AG04450 (cell line): ENCODE measurements at regions of chr6 and their contacts with region 1.

Region 1: GRCh38 chr6:52647199-52647598 is 23.7 kb upstream of the TMEM14A start:
- DNase-seq: no peak
- H3K4me3 ChIP-seq: no peak overlapping the region
- H3K27ac ChIP-seq: no peak overlapping the region
- H3K27me3 ChIP-seq: no peaks in the 10 kb centered on the region
- CTCF ChIP-seq: no peak

Region 2: DNA sequence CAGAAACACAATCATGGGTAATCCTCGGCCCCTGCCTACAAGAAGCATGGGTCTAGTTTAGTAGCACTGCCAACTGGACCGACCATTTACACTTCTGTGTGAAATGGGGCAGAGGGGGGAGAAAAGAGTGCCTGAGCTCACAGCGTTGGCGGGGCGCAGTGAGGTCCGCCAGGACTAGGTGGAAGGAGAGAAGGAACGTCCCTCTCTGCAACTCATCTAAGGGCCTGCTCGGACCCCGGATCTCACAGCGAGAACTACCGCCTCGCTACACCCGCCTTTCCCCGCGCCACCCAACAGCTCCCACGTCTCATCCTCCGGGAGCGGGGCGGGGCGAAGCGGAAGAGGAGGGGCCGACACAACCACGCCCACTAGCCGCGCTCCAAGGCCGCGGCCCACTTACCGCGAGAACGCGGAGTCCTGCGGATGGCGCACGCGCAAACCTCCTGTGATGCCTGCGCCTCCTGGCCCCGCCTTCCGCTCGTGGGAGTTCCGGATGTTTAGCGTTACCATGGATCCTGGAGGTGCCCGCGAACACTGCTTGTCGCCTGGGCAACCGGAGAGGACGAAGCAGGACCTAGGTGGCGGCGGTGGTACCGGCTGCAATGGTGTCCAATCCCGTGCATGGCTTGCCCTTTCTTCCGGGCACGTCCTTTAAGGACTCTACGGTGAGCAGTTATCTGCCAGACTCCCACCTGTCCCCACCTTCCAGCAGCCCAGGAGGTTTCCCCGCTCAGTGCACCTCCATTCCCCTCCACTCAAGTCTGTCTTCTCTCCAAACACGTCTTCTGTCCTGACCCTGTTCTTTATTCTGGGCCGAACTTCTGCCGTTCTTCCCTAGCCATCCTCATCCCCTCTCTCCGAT is 227.2 kb before region 1 on chr6 and contains the start of gene EFHC1:
- CTCF ChIA-PET with region 1: interaction called, 89 read pairs
- POLR2A ChIA-PET with region 1: interaction called, 6 read pairs
- DNase-seq: peak; percentile 93
- H3K4me3 ChIP-seq: peak within 1 kb of the TSS; percentile 78
- H3K27ac ChIP-seq: peak within 1 kb of the TSS; percentile 69
- H3K27me3 ChIP-seq: no peaks in the 10 kb centered on the region
- CTCF ChIP-seq: no peak
- polyA plus RNA-seq, gene EFHC1: 43.3 and 59.8 TPM in 2 replicates

Region 3: DNA sequence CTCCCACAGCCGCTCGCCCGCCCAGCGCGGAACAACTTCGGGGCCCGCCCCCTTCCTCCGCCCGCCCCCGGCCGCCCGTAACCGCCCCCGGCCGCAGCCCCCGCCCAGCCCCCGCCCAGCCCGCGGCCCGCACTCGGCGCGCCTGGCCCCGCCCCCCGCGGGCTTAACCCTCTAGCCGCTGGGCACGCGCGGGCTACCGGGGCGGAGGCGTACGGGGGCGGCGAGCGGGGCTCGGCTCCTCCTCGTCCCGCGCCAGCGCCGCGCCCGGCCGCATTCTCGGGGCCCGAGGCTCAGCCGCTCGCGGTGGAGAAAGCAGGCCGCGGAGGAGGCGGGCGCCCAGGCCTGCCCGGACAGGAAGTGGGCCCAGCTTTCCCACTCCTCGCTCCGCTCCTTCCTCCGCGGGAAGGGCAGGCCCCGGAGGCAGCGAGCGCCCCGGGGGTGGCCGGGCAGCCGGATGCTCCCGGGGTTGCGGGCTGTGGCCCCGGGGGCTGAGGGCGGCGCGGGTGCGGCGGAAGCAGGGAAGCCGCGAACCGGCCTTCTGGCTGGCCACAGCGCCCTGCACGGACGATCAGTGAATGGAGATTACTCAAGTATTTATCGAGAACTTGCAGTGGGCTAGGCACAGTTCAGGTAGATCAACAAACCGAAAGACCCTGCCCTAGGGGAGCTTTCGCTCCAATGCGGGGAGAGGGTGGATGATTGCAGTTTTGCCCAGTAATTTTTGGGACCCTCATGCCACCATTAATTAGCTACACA is 70.0 kb before region 1 on chr6 and contains the start of gene TRAM2:
- CTCF ChIA-PET with region 1: interaction called, 20 read pairs
- POLR2A ChIA-PET with region 1: no interaction called
- DNase-seq: no peak
- H3K4me3 ChIP-seq: peak within 1 kb of the TSS; percentile 94
- H3K27ac ChIP-seq: peak within 1 kb of the TSS; percentile 89
- H3K27me3 ChIP-seq: no peaks in the 10 kb centered on the region
- CTCF ChIP-seq: no peak
- polyA plus RNA-seq, gene TRAM2: 134 and 152 TPM in 2 replicates

Region 4: DNA sequence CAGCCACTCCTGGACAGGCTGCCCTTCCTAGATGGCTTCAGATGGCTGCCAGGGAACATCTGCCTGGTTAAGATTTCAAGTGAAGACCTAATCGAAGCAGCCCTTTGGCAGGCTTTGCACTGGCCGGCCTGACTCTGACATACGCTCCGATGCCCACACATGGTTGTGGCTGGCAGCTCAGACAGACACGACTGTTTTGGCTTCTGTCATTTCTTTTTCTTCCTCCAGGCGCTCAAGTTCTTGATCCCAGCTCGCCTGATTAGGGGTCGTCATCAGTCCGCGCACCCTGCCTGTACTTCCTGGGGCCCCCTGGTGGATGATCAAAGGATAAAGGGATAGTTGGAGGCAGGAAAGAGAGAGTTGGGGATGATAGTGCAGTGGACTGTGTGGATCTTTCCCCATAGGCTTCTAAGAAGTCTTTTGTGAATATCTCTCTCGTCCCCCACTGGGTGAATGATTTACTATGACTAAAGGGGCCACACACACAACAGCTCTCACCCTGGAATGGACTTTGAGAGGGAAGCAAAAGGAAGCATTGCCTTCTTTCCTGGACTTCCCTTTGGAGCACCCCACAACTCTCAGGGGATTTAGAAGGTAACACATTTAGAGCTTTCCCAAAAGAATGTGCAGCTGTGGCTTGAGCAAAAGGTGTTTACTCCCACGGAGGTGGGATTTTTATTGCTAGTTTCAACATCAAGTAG is 48.9 kb before region 1 on chr6:
- CTCF ChIA-PET with region 1: interaction called, 60 read pairs
- POLR2A ChIA-PET with region 1: no interaction called
- DNase-seq: no peak
- H3K4me3 ChIP-seq: no peak overlapping the region
- H3K27ac ChIP-seq: no peak overlapping the region
- H3K27me3 ChIP-seq: no peaks in the 10 kb centered on the region
- CTCF ChIP-seq: peak; percentile 86

Region 5: GRCh38 chr6:52610016-52610415 is 37.2 kb before region 1 on chr6:
- CTCF ChIA-PET with region 1: interaction called, 30 read pairs
- POLR2A ChIA-PET with region 1: no interaction called
- DNase-seq: no peak
- H3K4me3 ChIP-seq: no peak overlapping the region
- H3K27ac ChIP-seq: no peak overlapping the region
- H3K27me3 ChIP-seq: no peaks in the 10 kb centered on the region
- CTCF ChIP-seq: no peak

Region 6: DNA sequence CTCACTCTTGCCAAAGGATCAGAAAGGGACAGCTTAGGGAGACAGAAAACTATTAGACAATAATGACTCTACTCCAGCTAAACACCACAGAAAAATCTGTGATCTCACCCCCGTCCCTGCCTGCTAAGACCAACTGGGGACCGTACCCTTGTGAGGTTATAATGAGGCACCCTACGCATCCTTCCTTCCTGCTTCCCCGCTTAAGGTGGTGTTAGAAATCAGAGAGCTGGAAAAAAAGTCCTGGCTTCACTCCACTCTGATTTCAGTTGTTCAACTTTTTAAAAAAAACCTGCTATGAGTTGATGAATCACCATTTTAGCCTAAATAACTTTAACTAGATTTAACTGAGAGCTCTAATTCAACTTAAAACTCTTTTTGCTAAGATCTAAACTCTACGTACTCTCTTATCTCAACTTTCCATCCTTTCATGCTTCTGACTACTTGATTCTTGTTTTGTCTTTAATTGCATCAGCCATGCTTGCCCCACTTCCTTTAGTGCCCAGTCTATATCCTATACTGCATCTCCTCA is 12.1 kb before region 1 on chr6:
- CTCF ChIA-PET with region 1: interaction called, 53 read pairs
- POLR2A ChIA-PET with region 1: interaction called, 4 read pairs
- DNase-seq: no peak
- H3K4me3 ChIP-seq: no peak overlapping the region
- H3K27ac ChIP-seq: peak overlapping the region; percentile 71
- H3K27me3 ChIP-seq: no peaks in the 10 kb centered on the region
- CTCF ChIP-seq: no peak

Region 7: GRCh38 chr6:52664186-52664990 is 17.2 kb after region 1 on chr6:
- CTCF ChIA-PET with region 1: interaction called, 70 read pairs
- POLR2A ChIA-PET with region 1: interaction called, 3 read pairs
- DNase-seq: peak; percentile 88
- H3K4me3 ChIP-seq: peak overlapping the region; percentile 76
- H3K27ac ChIP-seq: no peak overlapping the region
- H3K27me3 ChIP-seq: no peaks in the 10 kb centered on the region
- CTCF ChIP-seq: no peak